ENCODE measurements at regions of chr3 and their contacts with region 1.

Region 1: DNA sequence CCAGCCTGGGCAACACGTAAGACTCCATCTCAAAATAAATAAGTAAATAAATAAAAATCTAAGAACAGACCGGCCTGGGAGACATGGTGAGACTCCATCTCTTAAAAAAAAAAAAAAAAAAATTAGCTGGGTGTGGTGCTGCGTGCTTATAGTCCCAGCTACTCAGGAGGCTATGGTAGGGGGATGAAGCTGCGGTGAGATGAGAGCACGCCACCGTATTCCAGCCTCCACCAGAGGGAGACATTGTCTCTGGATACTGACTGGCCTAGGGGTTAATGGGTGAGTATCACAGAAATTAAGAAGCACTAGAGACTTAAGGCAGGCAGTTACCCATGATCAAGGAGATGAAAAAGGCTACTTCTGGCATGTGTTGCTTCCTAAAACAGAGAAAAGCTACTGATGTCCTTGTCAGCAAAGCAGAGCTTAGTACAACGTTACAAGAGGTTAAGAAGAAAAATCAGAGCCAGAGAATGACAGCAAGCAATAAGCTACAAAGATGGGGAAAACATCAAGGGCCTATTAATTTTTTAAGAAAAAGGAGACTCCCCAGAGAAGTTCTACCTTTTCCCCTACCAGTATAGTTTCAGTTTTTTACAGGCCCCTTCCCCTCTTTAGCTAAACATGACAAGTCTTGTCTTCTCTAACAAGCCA is 8.6 kb downstream of the TFRC start:
- DNase-seq: peak; percentile 66
- H3K4me3 ChIP-seq: no peak overlapping the region
- H3K27ac ChIP-seq: no peak overlapping the region
- H3K4me1 ChIP-seq: no peaks in the 10 kb centered on the region
- H3K27me3 ChIP-seq: no peaks in the 10 kb centered on the region
- CTCF ChIP-seq: peak; percentile 72 to 80
- POLR2A ChIP-seq: no peak

Region 2: GRCh38 chr3:196192036-196192523 is 118.8 kb after region 1 on chr3:
- CTCF ChIA-PET with region 1: interaction called, 52 read pairs
- POLR2A ChIA-PET with region 1: no interaction called
- dilution Hi-C with region 1: no loop called
- intact Hi-C with region 1: loop called (anchors 1 kb)
- DNase-seq: no peak
- H3K4me3 ChIP-seq: no peak overlapping the region
- H3K27ac ChIP-seq: no peak overlapping the region
- H3K4me1 ChIP-seq: no peaks in the 10 kb centered on the region
- H3K27me3 ChIP-seq: no peaks in the 10 kb centered on the region
- CTCF ChIP-seq: no peak
- POLR2A ChIP-seq: no peak

Measured in endothelial cell of umbilical vein (primary cell).